Activated naive CD4-positive, alpha-beta T cell treated with anti-CD3 and anti-CD28 coated beads, Interleukin-2, amount 10 ng/mL, durations not matched to agents 7 days and 5 days (primary cell): ENCODE measurements at regions of chr12 and their contacts with region 1.

Region 1: GRCh38 chr12:9707864-9708808 is 24.8 kb downstream of the CLECL1 start:
- DNase-seq: peak; percentile 79
- H3K4me3 Mint-ChIP-seq: peak overlapping the region; percentile 52
- H3K27ac Mint-ChIP-seq: peak overlapping the region; percentile 85
- H3K4me1 Mint-ChIP-seq: peaks cover 59% of the 10 kb centered on the region
- H3K27me3 Mint-ChIP-seq: no peaks in the 10 kb centered on the region

Region 2: GRCh38 chr12:9634177-9634803 is 73.8 kb before region 1 on chr12:
- CTCF ChIA-PET with region 1: interaction called, 83 read pairs
- DNase-seq: peak; percentile 87
- H3K4me3 Mint-ChIP-seq: no peak overlapping the region
- H3K27ac Mint-ChIP-seq: peak overlapping the region; percentile 4
- H3K4me1 Mint-ChIP-seq: peaks cover 66% of the 10 kb centered on the region
- H3K27me3 Mint-ChIP-seq: peaks cover 4% of the 10 kb centered on the region

Region 3: GRCh38 chr12:9687228-9687627 is 20.9 kb before region 1 on chr12:
- CTCF ChIA-PET with region 1: interaction called, 15 read pairs
- DNase-seq: no peak
- H3K4me3 Mint-ChIP-seq: no peak overlapping the region
- H3K27ac Mint-ChIP-seq: peak overlapping the region; percentile 55
- H3K4me1 Mint-ChIP-seq: peaks cover 87% of the 10 kb centered on the region
- H3K27me3 Mint-ChIP-seq: no peaks in the 10 kb centered on the region

Region 4: DNA sequence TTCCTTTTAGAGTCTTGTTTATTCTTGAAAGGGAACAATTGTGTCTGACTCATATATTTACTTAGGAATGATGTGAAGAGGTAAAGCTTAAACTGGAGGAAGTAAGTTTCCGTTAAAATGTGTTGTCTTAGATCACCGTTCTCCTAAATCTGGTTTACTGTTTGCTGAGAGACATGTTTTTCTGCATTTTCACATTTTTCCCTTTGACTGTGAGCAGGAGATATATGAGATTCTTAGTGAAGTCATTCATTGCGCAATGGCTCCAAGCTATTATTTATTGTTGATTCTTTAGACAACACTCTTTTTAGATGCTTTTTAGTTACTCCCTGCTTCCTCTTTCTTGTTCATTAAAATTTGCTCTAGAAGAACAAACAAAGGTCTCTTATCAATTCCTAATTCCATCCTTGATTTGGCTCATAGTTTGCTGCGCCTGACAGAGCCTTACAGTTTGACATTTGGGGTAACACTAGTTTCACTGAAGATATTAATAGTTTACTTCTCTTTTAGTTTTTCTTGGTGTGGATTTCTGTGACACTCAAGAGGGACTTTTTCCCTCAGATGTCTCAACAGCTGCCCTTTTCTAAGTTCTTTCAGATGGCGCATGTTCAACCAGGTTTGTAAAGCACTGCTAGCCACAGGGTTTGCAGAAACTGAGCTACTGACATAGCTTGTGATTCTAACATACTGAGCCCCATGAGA is 13.4 kb after region 1 on chr12:
- CTCF ChIA-PET with region 1: interaction called, 14 read pairs
- DNase-seq: no peak
- H3K4me3 Mint-ChIP-seq: no peak overlapping the region
- H3K27ac Mint-ChIP-seq: no peak overlapping the region
- H3K4me1 Mint-ChIP-seq: peaks cover 31% of the 10 kb centered on the region
- H3K27me3 Mint-ChIP-seq: peaks cover 3% of the 10 kb centered on the region

Region 5: GRCh38 chr12:9741726-9742125 is 33.6 kb after region 1 on chr12:
- CTCF ChIA-PET with region 1: interaction called, 17 read pairs
- DNase-seq: peak; percentile 89
- H3K4me3 Mint-ChIP-seq: peak overlapping the region; percentile 88
- H3K27ac Mint-ChIP-seq: peak overlapping the region; percentile 100
- H3K4me1 Mint-ChIP-seq: peaks cover 75% of the 10 kb centered on the region
- H3K27me3 Mint-ChIP-seq: peaks cover 4% of the 10 kb centered on the region